ENCODE measurements at regions of chr12 and their contacts with region 1.

Region 1: GRCh38 chr12:91316907-91317269 is 134.3 kb upstream of the DCN start:
- DNase-seq: no peak
- CTCF ChIP-seq: no peak

Region 2: GRCh38 chr12:90959538-90960139 is 357.2 kb before region 1 on chr12:
- in situ Hi-C with region 1: loop called (anchors 25 kb)
- DNase-seq: peak; percentile 32
- CTCF ChIP-seq: peak; percentile 60